ENCODE measurements at regions of chr17 and their contacts with region 1.

Region 1: GRCh38 chr17:64081802-64082799 is 47.8 kb downstream of the ERN1 start:
- DNase-seq: peak; percentile 79 to 93
- ATAC-seq: peak; percentile 85 to 95
- H3K4me3 ChIP-seq: peak overlapping the region; percentile 2; the same call in 1 of the 3 replicates
- H3K27ac ChIP-seq: peak overlapping the region; percentile 88 to 89
- H3K4me1 ChIP-seq: peaks cover 77% of the 10 kb centered on the region
- CTCF ChIP-seq: no peak
- EP300 ChIP-seq: peak; percentile 87 to 93; a peak in 4 of 5 replicates
- POLR2A ChIP-seq: no peak
- RAD21 ChIP-seq: peak in 1 of 2 experiments; percentile 49; a peak in 3 of 5 replicates

Region 2: GRCh38 chr17:64095144-64095882 is 13.2 kb after region 1 on chr17:
- CTCF ChIA-PET with region 1: interaction called, 10 read pairs
- POLR2A ChIA-PET with region 1: no interaction called
- DNase-seq: no peak
- ATAC-seq: no peak
- H3K4me3 ChIP-seq: no peak overlapping the region
- H3K27ac ChIP-seq: no peak overlapping the region
- H3K4me1 ChIP-seq: peaks cover 9% of the 10 kb centered on the region; the same call in 2 of the 3 replicates
- CTCF ChIP-seq: no peak
- EP300 ChIP-seq: no peak
- POLR2A ChIP-seq: no peak
- RAD21 ChIP-seq: no peak

Region 3: DNA sequence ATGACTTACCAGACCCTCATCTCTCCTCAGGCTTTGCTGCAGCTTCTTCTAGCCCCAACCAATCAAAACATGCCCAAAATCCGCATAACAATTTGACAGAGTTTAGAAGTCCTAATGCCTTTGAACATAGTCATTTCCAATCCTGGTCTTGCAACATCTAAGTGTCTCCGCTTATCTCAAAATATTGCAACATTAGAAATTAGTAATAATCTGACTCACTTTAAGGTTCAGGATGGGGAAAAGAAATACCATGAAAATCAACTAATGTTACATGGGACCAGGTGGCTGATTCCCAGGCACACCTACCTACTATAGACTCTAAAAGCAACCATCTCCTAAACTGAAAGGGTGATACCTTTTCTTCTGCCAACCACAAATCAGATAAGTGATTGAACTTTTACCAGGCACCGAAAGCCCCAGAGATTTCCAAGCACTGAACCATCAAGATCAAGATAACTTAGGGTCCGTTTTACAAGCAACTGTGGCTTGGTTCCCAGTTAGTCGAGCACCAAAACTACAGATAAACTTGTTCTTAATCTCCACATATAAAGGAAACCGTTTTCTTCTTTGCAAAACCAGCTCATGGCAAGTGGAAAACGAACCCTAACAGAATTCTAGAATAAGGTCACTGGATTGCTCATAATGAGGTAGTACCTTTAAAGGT is 33.9 kb after region 1 on chr17:
- CTCF ChIA-PET with region 1: interaction called, 10 read pairs
- POLR2A ChIA-PET with region 1: no interaction called
- DNase-seq: peak; percentile 30 to 34
- ATAC-seq: peak; percentile 53 to 69; a peak in 5 of 6 replicates
- H3K4me3 ChIP-seq: no peak overlapping the region
- H3K27ac ChIP-seq: peak overlapping the region; percentile 19 to 47; a peak in 4 of 6 replicates
- H3K4me1 ChIP-seq: peaks cover 49% of the 10 kb centered on the region
- CTCF ChIP-seq: no peak
- EP300 ChIP-seq: peak; percentile 27 to 31; a peak in 2 of 5 replicates
- POLR2A ChIP-seq: no peak
- RAD21 ChIP-seq: no peak

Region 4: GRCh38 chr17:64155751-64156544 is 73.8 kb after region 1 on chr17:
- CTCF ChIA-PET with region 1: no interaction called
- POLR2A ChIA-PET with region 1: no interaction called
- DNase-seq: no peak
- ATAC-seq: peak in 1 of 2 experiments; percentile 27; a peak in 3 of 6 replicates
- H3K4me3 ChIP-seq: no peak overlapping the region
- H3K27ac ChIP-seq: no peak overlapping the region
- H3K4me1 ChIP-seq: no peaks in the 10 kb centered on the region
- CTCF ChIP-seq: no peak
- EP300 ChIP-seq: no peak
- POLR2A ChIP-seq: no peak
- RAD21 ChIP-seq: no peak

Measured in A549 (cell line).